AG04450 (cell line): ENCODE measurements at regions of chr12 and their contacts with region 1.

Region 1: DNA sequence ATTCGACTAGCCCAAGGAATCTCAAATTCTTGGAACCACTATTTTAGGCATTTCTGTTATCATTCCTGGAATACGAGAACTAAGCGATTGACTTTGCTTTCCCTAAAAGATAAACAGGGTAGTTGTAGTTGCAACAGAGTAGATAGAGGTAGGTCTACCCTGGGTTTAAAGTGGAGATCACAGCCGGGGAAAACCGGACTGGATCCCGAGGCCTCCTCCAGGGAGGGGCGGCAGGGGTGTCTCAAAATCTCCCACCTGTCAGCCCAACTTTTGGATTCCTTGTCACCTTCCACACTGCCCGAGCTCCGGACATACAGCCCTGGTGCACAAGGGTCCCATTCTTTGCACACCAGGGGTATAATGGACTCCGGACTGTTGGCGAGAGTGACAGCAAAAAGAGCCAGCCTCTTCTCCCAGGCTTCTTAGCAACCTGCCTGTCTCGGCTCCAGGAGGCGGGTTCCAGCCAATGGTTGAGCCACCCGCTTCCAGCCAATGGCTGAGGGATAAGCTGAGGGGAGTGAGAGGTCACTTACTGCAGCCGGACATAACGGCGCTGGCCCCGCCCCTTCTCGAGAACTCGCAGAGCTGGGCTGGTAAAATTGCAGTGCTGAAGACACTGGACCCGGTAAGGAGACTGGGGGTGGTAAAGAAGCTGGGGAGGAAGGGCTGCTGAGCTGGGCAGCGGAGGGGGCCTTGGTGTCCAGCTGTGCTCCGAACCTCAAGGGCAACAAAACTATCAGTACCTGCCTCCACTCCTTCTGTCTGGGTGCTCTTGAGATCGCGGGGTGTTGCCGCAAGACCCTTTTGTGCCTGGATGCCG is at the start of gene SUOX:
- DNase-seq: peak; percentile 94
- H3K4me3 ChIP-seq: peak within 1 kb of the TSS; percentile 97
- H3K27ac ChIP-seq: peak within 1 kb of the TSS; percentile 52
- H3K27me3 ChIP-seq: no peaks in the 10 kb centered on the region
- CTCF ChIP-seq: no peak
- polyA plus RNA-seq, gene SUOX: 21.0 and 22.8 TPM in 2 replicates

Region 2: GRCh38 chr12:55797068-55797467 is 199.9 kb before region 1 on chr12:
- CTCF ChIA-PET with region 1: interaction called, 10 read pairs
- POLR2A ChIA-PET with region 1: no interaction called
- DNase-seq: no peak
- H3K4me3 ChIP-seq: no peak overlapping the region
- H3K27ac ChIP-seq: no peak overlapping the region
- H3K27me3 ChIP-seq: no peaks in the 10 kb centered on the region
- CTCF ChIP-seq: peak; percentile 61

Region 3: DNA sequence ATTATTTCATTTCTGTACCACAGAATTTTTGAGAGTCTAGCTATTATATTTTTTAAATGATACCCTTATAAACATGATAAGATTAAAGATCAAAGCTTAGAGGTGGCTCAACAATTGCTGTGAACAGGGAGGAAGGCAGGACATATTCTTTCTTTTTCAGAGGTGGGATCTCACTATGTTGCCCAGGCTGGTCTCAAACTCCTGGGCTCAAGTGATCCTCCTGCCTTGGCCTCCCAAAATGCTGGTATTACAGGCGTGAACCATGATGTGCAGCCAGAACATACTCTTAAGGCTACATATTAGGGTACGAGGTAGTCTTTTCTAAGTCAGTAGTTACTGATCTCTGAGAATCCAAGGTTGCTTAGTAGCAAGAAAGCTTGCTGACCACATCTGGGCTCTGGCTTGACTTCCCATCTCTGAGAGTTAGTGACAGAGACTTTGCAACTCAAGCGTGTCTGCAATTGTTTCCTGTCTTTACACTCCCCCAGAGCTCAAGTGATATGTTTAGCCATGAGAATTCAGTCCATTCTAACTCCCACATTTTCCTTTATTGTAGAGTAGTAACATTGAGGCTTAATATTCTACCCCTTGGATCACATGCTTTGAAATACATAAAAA is 14.5 kb before region 1 on chr12:
- CTCF ChIA-PET with region 1: interaction called, 96 read pairs
- POLR2A ChIA-PET with region 1: interaction called, 4 read pairs
- DNase-seq: no peak
- H3K4me3 ChIP-seq: no peak overlapping the region
- H3K27ac ChIP-seq: no peak overlapping the region
- H3K27me3 ChIP-seq: no peaks in the 10 kb centered on the region
- CTCF ChIP-seq: no peak

Region 4: GRCh38 chr12:56014206-56014605 is 17.3 kb after region 1 on chr12:
- CTCF ChIA-PET with region 1: interaction called, 49 read pairs
- POLR2A ChIA-PET with region 1: interaction called, 5 read pairs
- DNase-seq: no peak
- H3K4me3 ChIP-seq: no peak overlapping the region
- H3K27ac ChIP-seq: no peak overlapping the region
- H3K27me3 ChIP-seq: no peaks in the 10 kb centered on the region
- CTCF ChIP-seq: no peak

Region 5: GRCh38 chr12:56029666-56030293 is 32.9 kb after region 1 on chr12:
- CTCF ChIA-PET with region 1: interaction called, 104 read pairs
- POLR2A ChIA-PET with region 1: no interaction called
- DNase-seq: no peak
- H3K4me3 ChIP-seq: no peak overlapping the region
- H3K27ac ChIP-seq: no peak overlapping the region
- H3K27me3 ChIP-seq: no peaks in the 10 kb centered on the region
- CTCF ChIP-seq: peak; percentile 89

Region 6: DNA sequence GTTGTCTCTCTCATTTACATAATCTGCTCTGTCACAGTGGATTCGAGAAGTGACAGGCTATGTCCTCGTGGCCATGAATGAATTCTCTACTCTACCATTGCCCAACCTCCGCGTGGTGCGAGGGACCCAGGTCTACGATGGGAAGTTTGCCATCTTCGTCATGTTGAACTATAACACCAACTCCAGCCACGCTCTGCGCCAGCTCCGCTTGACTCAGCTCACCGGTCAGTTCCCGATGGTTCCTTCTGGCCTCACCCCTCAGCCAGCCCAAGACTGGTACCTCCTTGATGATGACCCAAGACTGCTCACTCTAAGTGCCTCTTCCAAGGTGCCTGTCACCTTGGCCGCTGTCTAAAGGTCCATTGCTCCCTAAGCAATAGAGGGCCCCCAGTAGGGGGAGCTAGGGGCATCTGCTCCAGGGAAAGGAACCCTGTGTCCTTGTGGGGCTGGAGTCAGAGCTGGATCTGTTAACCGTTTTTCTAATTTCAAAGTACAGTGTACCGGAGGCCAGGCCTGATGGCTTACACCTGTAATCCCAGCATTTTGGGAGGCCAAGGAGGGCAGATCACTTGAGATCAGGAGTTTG is 88.1 kb after region 1 on chr12:
- CTCF ChIA-PET with region 1: no interaction called
- POLR2A ChIA-PET with region 1: no interaction called
- DNase-seq: no peak
- H3K4me3 ChIP-seq: no peak overlapping the region
- H3K27ac ChIP-seq: no peak overlapping the region
- H3K27me3 ChIP-seq: peaks cover 39% of the 10 kb centered on the region
- CTCF ChIP-seq: peak; percentile 37